ENCODE measurements at regions of chr9 and their contacts with region 1.

Region 1: GRCh38 chr9:94656200-94656599 is 16.9 kb upstream of the FBP1 start:
- DNase-seq: no peak
- ATAC-seq: no peak
- H3K4me3 ChIP-seq: no peak overlapping the region
- H3K27ac ChIP-seq: no peak overlapping the region
- H3K4me1 ChIP-seq: no peaks in the 10 kb centered on the region
- H3K27me3 ChIP-seq: no peaks in the 10 kb centered on the region
- CTCF ChIP-seq: no peak

Region 2: GRCh38 chr9:94534901-94535300 is 121.3 kb before region 1 on chr9:
- CTCF ChIA-PET with region 1: no interaction called
- POLR2A ChIA-PET with region 1: no interaction called
- in situ Hi-C with region 1: no loop called
- intact Hi-C with region 1: no loop called
- DNase-seq: no peak
- ATAC-seq: no peak
- H3K4me3 ChIP-seq: no peak overlapping the region
- H3K27ac ChIP-seq: no peak overlapping the region
- H3K4me1 ChIP-seq: no peaks in the 10 kb centered on the region
- H3K27me3 ChIP-seq: no peaks in the 10 kb centered on the region
- CTCF ChIP-seq: no peak

Region 3: GRCh38 chr9:94675008-94675881 is 19.0 kb after region 1 on chr9:
- CTCF ChIA-PET with region 1: interaction called, 22 read pairs
- POLR2A ChIA-PET with region 1: no interaction called
- in situ Hi-C with region 1: no loop called
- intact Hi-C with region 1: no loop called
- DNase-seq: no peak
- ATAC-seq: no peak
- H3K4me3 ChIP-seq: no peak overlapping the region
- H3K27ac ChIP-seq: no peak overlapping the region
- H3K4me1 ChIP-seq: no peaks in the 10 kb centered on the region
- H3K27me3 ChIP-seq: no peaks in the 10 kb centered on the region
- CTCF ChIP-seq: no peak